ENCODE measurements at regions of chr3 and their contacts with region 1.

Region 1: DNA sequence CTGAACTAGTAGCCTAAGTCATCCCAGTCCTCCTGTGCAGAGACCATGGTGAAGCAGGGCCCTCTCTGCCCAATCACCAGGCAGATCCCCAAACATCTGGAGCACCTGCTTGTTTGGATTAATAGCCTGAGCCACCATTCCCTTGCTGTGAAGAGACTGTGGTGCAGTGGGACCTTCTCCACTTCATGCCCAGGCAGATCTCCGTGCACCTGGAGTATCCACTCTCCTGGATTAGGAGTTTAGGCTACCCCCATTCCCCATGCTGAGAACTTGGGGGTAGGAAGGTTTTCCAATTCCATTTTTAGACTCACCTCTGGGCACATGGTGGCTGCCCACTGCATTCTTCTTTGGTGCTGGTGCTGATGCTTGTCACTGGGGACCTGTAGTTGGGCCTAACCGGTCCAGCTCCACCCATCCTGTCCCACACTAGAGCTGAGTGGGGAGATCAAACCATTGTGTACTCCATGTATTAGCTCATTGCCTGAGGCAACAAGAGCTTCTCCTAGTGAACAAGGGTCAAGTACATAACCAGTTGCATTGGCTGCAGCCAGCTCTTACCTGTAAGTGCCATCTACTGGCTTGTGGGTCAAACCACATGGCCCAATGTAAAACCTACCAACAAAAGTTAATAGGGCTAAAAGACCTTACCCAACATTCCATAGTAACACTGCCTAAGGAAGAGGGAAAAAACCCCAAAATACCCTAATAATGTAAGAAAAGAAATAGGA is 382.5 kb upstream of the CBLB start:
- DNase-seq: no peak
- H3K4me3 ChIP-seq: no peak overlapping the region
- H3K4me3 Mint-ChIP-seq: no peak overlapping the region
- H3K27ac ChIP-seq: no peak overlapping the region
- H3K27ac Mint-ChIP-seq: no peak overlapping the region
- H3K4me1 ChIP-seq: no peaks in the 10 kb centered on the region
- H3K4me1 Mint-ChIP-seq: peaks cover 0 to 5% (median 3%) of the 10 kb centered on the region in 3 donors
- H3K27me3 ChIP-seq: no peaks in the 10 kb centered on the region
- H3K27me3 Mint-ChIP-seq: no peaks in the 10 kb centered on the region

Region 2: GRCh38 chr3:106228271-106228670 is 23.1 kb before region 1 on chr3:
- CTCF ChIA-PET with region 1: no interaction called
- POLR2A ChIA-PET with region 1: no interaction called
- DNase-seq: no peak
- H3K4me3 ChIP-seq: no peak overlapping the region
- H3K4me3 Mint-ChIP-seq: no peak overlapping the region
- H3K27ac ChIP-seq: no peak overlapping the region
- H3K27ac Mint-ChIP-seq: peak overlapping the region in 2 of 8 donors; percentile 11 to 36
- H3K4me1 ChIP-seq: peaks cover 13% of the 10 kb centered on the region
- H3K4me1 Mint-ChIP-seq: peaks cover 29 to 39% (median 38%) of the 10 kb centered on the region in 3 donors
- H3K27me3 ChIP-seq: no peaks in the 10 kb centered on the region
- H3K27me3 Mint-ChIP-seq: peaks cover 0 to 2% of the 10 kb centered on the region in 2 donors

Region 3: GRCh38 chr3:107850669-107851068 is 1599.3 kb after region 1 on chr3:
- CTCF ChIA-PET with region 1: no interaction called
- POLR2A ChIA-PET with region 1: interaction called, 10 read pairs
- DNase-seq: no peak
- H3K4me3 ChIP-seq: no peak overlapping the region
- H3K4me3 Mint-ChIP-seq: no peak overlapping the region
- H3K27ac ChIP-seq: no peak overlapping the region
- H3K27ac Mint-ChIP-seq: no peak overlapping the region
- H3K4me1 ChIP-seq: no peaks in the 10 kb centered on the region
- H3K4me1 Mint-ChIP-seq: no peaks in the 10 kb centered on the region
- H3K27me3 ChIP-seq: no peaks in the 10 kb centered on the region
- H3K27me3 Mint-ChIP-seq: peaks cover 0 to 11% of the 10 kb centered on the region in 2 donors

Measured in CD8-positive, alpha-beta memory T cell (primary cell).